Gastrocnemius medialis (tissue), 4 donors: ENCODE measurements at regions of chr2 and their contacts with region 1.

Region 1: DNA sequence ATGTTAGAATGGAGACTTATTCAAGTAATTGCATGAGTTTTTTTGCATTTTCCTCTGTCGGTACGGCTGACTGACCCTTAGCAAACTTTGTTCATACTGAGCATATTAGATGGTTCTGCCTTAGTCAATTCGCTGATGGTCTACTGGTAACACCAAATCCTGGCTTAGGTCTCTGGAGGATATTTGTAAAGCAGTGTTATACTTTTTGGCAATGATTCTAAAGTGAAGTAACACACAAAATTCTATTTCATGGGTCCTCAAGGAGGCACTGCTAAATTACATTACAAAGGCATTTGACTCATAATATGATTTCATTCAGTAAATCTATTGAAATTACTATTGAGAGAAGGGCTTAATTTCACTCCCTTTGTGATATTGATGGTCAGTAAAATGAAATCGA is 246.8 kb upstream of the RASGRP3 start:
- DNase-seq: no peak
- ATAC-seq: no peak
- H3K4me3 ChIP-seq: no peak overlapping the region
- H3K27ac ChIP-seq: no peak overlapping the region
- H3K4me1 ChIP-seq: no peaks in the 10 kb centered on the region
- H3K27me3 ChIP-seq: no peaks in the 10 kb centered on the region
- CTCF ChIP-seq: no peak
- POLR2A ChIP-seq: no peak

Region 2: GRCh38 chr2:33166287-33166881 is 63.3 kb before region 1 on chr2:
- in situ Hi-C with region 1: no loop called
- intact Hi-C with region 1: loop called (anchors 2 kb)
- DNase-seq: no peak
- ATAC-seq: no peak
- H3K4me3 ChIP-seq: no peak overlapping the region
- H3K27ac ChIP-seq: no peak overlapping the region
- H3K4me1 ChIP-seq: peaks cover 0 to 5% of the 10 kb centered on the region in 2 donors
- H3K27me3 ChIP-seq: no peaks in the 10 kb centered on the region
- CTCF ChIP-seq: no peak
- POLR2A ChIP-seq: no peak